ENCODE measurements at regions of chr16 and their contacts with region 1.

Region 1: DNA sequence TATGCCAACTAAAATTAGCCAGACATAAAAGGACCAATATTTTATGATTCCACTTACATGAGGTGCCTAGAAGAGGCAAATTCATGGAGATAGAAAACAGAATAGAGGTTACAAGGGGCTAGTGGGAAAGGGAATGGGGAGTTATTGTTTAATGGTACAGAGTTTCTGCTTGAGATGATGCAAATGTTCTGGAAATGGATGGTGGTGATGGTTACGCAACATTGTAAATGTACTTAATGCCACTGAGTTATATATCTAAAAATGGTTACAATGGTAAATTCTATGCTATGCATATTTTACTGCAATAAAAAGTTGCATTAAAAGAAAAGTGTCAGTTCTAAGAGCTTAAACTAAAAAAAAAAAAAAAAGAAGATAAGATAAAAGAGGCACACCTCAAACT is 17.9 kb downstream of the MT1X start:
- DNase-seq: no peak
- ATAC-seq: no peak
- H3K4me3 ChIP-seq: no peak overlapping the region
- H3K4me1 ChIP-seq: no peaks in the 10 kb centered on the region
- CTCF ChIP-seq: no peak

Region 2: DNA sequence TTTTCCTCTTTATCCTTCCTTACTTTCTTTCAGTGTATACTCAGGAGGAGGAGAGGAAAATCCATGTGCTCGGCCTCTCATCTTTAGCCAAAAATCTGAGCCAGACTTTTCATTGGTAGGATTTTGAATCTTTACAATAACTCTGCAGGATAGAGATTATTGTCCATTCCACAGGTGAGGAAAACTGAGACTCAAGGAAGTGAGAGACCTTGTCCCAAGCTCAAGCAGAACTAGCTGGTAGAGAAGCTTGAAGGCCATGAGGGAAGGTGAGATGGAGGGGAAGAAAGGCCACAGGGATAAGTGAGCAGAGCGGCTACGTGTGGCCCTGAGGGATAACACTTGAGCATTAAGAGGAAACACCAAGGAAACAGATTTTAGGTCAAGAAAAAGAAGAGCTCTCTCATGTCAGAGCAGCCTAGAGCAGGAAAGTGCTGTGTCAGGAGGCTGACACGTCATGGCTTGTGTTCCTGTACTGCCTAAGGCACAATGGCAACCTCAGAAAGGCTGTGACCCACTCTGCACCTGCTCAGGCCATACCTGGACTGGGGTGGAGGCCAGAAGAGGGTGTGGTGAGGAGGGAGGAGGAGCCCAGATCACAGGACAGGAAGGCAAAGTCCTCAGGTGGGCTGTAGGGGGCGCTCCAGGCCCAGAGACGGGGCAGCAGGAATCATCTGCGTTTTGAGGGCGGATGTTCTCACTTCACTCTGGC is 123.5 kb before region 1 on chr16:
- intact Hi-C with region 1: loop called (anchors 5 kb)
- DNase-seq: peak; percentile 83 to 91 (median 87)
- ATAC-seq: peak; percentile 100
- H3K4me3 ChIP-seq: no peak overlapping the region
- H3K4me1 ChIP-seq: no peaks in the 10 kb centered on the region
- CTCF ChIP-seq: peak; percentile 60